ENCODE measurements at regions of chr5 and their contacts with region 1.

Region 1: GRCh38 chr5:171630027-171630669 is 155.5 kb upstream of the SMIM23 start:
- DNase-seq: peak; percentile 71 to 88
- ATAC-seq: peak; percentile 97 to 100
- H3K4me3 ChIP-seq: peak overlapping the region; percentile 50
- H3K27ac ChIP-seq: peak overlapping the region; percentile 44 to 45; a peak in 3 of 6 replicates
- H3K4me1 ChIP-seq: no peaks in the 10 kb centered on the region
- CTCF ChIP-seq: peak; percentile 59
- EP300 ChIP-seq: no peak
- POLR2A ChIP-seq: no peak
- RAD21 ChIP-seq: peak; percentile 78 to 81

Region 2: DNA sequence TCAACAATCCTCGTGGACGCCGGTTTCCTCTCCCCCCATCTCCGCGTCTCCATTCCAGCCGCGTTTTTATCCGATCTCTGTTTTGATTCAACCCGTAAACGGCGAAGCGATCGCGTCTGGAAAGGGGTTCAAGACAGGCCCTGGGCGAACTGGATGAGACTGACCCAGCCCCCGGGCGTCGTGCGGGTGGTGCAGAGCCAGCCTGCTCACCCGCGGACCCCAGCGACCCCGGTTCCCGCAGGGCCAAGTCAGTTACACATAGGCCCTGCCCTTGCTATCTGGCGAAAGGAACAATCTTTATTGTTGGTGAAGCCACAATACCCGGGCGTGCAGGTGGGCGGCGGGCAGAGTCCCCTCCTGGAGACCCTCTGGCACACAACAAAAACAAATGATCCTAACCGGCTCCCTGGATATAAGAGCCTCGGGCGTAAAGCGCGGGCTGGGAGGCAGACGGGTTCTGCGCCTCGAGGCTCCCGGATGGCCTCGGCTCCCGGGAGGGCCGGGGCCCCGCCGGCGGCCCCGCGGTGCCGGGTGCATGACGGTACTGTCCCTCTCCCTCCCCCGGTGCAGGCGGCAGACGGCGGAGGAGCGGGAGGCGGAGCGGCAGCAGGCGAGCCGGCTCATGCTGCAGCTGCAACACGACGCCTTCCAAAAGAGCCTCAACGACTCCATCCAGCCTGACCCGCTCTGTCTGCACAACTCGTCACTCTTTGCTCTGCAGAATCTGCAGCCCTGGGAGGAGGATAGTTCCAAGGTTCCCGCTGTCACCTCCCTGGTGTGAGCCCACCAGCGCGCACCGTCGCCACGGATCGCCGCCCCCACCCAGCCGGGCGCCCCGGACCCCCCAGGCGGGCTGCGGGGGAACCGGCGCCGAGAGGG is 319.1 kb before region 1 on chr5:
- CTCF ChIA-PET with region 1: no interaction called
- POLR2A ChIA-PET with region 1: no interaction called
- DNase-seq: no peak
- ATAC-seq: peak; percentile 26 to 41; a peak in 2 of 6 replicates
- H3K4me3 ChIP-seq: no peak overlapping the region
- H3K27ac ChIP-seq: no peak overlapping the region
- H3K4me1 ChIP-seq: no peaks in the 10 kb centered on the region
- CTCF ChIP-seq: no peak
- EP300 ChIP-seq: no peak
- POLR2A ChIP-seq: no peak
- RAD21 ChIP-seq: no peak

Region 3: DNA sequence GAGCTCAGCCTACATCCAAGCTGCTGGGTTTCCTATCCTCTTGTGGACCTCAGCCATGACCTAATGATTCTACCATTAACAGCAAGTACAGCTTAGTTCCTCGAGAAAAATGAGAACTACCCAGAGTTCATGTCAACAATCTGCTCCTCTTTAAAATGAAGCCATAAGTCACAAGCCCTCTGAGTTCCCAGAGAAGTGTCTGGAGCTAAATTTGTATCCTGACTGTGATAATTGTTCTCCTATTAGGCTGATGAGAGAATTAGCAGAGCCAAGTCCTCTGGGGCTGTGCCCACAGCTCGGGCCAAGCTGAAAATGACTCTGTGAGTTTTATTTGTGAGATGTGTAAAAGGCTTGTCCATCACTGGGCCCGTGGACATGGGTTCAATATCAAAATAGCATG is 10.3 kb after region 1 on chr5:
- CTCF ChIA-PET with region 1: interaction called, 27 read pairs
- POLR2A ChIA-PET with region 1: interaction called, 5 read pairs
- DNase-seq: no peak
- ATAC-seq: no peak
- H3K4me3 ChIP-seq: no peak overlapping the region
- H3K27ac ChIP-seq: no peak overlapping the region
- H3K4me1 ChIP-seq: no peaks in the 10 kb centered on the region
- CTCF ChIP-seq: no peak
- EP300 ChIP-seq: no peak
- POLR2A ChIP-seq: no peak
- RAD21 ChIP-seq: no peak

Region 4: GRCh38 chr5:171835077-171835476 is 204.9 kb after region 1 on chr5:
- CTCF ChIA-PET with region 1: interaction called, 13 read pairs
- POLR2A ChIA-PET with region 1: no interaction called
- DNase-seq: no peak
- ATAC-seq: no peak
- H3K4me3 ChIP-seq: no peak overlapping the region
- H3K27ac ChIP-seq: no peak overlapping the region
- H3K4me1 ChIP-seq: no peaks in the 10 kb centered on the region
- CTCF ChIP-seq: no peak
- EP300 ChIP-seq: no peak
- POLR2A ChIP-seq: no peak
- RAD21 ChIP-seq: no peak

Region 5: DNA sequence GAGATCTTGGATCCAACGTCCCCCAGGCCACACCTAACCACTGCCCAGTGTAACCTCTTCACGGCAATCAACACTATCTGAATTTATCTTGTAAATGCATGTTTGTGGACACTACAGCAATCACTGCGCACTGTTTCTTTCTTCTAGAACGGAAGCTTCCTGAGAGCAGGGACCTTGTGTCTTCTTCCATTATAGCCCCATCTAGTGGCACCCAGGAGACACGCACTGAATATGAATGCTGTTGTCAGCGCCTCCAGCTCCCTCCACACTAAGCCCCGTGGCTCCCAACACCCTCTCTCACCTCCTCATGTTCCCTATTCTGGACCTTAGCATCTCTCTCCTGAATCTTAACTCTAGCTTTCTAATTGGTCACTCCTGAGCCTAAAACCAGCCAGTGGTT is 228.2 kb after region 1 on chr5:
- CTCF ChIA-PET with region 1: interaction called, 21 read pairs
- POLR2A ChIA-PET with region 1: no interaction called
- DNase-seq: peak; percentile 38 to 48
- ATAC-seq: peak; percentile 60 to 78; a peak in 5 of 6 replicates
- H3K4me3 ChIP-seq: no peak overlapping the region
- H3K27ac ChIP-seq: no peak overlapping the region
- H3K4me1 ChIP-seq: no peaks in the 10 kb centered on the region
- CTCF ChIP-seq: peak; percentile 46
- EP300 ChIP-seq: no peak
- POLR2A ChIP-seq: no peak
- RAD21 ChIP-seq: peak; percentile 27 to 42; a peak in 2 of 5 replicates

Region 6: GRCh38 chr5:171907725-171908343 is 277.7 kb after region 1 on chr5:
- CTCF ChIA-PET with region 1: interaction called, 29 read pairs
- POLR2A ChIA-PET with region 1: no interaction called
- DNase-seq: peak; percentile 25 to 64
- ATAC-seq: peak; percentile 89 to 94; a peak in 5 of 6 replicates
- H3K4me3 ChIP-seq: no peak overlapping the region
- H3K27ac ChIP-seq: no peak overlapping the region
- H3K4me1 ChIP-seq: peaks cover 1% of the 10 kb centered on the region; the same call in 2 of the 3 replicates
- CTCF ChIP-seq: peak; percentile 88
- EP300 ChIP-seq: no peak
- POLR2A ChIP-seq: no peak
- RAD21 ChIP-seq: peak; percentile 77 to 79

Measured in A549 (cell line).